ENCODE measurements at regions of chr6 and their contacts with region 1.

Region 1: GRCh38 chr6:14728396-14729024 is 517.4 kb upstream of the JARID2 start:
- DNase-seq: no peak
- CTCF ChIP-seq: no peak

Region 2: GRCh38 chr6:14876778-14877613 is 148.5 kb after region 1 on chr6:
- in situ Hi-C with region 1: loop called (anchors 10 kb)
- DNase-seq: peak; percentile 45
- CTCF ChIP-seq: no peak

Measured in GM13976 (cell line).